ENCODE measurements at regions of chr5 and their contacts with region 1.

Region 1: DNA sequence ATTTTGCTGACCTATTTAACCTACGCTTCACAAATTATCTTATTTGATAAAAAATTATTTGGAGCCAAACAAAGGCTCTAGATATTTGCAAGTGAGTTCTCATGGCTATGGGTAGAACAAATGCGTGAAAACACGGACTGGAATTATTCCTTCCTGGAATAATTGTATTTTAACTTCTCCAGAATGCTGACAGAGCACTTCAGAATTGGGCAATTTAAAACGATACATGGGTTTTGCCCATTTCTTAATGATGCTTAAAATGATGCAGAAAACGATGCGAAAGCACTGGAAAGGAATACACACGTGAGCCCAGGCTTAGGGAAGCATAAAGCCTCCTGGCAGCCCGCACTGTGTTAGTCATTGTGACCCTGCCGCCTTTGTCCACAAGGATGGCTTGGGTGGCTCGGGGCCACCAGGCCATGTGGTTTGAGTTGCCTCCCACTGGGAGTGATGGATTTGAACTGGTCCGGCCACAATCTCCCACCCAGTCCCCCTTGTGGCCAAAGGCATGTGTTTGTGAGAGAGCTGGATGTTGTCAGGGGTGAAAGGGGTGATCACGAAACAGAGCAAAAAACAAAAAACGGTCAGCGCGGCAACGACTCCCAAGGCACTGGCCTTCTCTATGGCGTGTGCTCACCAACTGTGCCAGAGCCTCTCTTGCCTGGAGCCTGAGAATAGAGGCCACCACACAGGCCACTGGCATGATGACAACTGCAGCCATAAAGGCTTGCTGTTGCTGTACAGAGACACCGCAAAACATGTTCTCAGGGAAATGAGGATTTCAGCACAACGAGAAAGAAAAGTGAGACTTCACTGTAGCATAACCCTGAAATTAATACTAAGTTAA is 234.2 kb upstream of the ADAMTS16 start:
- DNase-seq: peak; percentile 70 to 88 (median 80)
- H3K4me3 ChIP-seq: no peak overlapping the region
- H3K27ac ChIP-seq: peak overlapping the region in 1 of 2 donors; percentile 80
- H3K4me1 ChIP-seq: peaks cover 24% of the 10 kb centered on the region
- H3K27me3 ChIP-seq: no peaks in the 10 kb centered on the region
- CTCF ChIP-seq: peak; percentile 35 to 59 (median 54)
- EP300 ChIP-seq: no peak
- POLR2A ChIP-seq: peak; percentile 30

Region 2: GRCh38 chr5:4418084-4418483 is 487.8 kb before region 1 on chr5:
- intact Hi-C with region 1: no loop called
- DNase-seq: no peak
- H3K4me3 ChIP-seq: no peak overlapping the region
- H3K27ac ChIP-seq: no peak overlapping the region
- H3K4me1 ChIP-seq: no peaks in the 10 kb centered on the region
- H3K27me3 ChIP-seq: no peaks in the 10 kb centered on the region
- CTCF ChIP-seq: no peak
- EP300 ChIP-seq: no peak
- POLR2A ChIP-seq: no peak

Region 3: DNA sequence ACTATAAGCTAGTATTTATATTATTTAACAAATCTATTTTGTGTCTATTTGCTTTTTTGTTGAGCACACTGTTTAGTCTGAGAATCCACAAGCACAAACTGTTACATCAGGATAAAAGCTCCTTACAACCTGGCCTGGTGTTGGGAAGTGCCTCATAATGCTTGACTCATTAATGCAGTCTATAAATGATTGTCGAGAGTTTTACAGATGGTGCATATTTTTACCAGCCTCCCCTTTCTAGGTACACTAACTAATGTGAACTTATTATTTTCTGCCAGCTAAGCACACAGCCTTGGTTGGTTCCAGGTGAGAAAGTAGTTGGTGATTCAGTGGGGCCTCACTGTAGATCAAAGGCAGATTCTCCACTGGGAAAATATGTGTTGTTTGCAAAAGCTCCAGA is 83.2 kb after region 1 on chr5:
- intact Hi-C with region 1: loop called in 1 of 4 experiments (anchors 10 kb)
- DNase-seq: no peak
- H3K4me3 ChIP-seq: no peak overlapping the region
- H3K27ac ChIP-seq: no peak overlapping the region
- H3K4me1 ChIP-seq: peaks cover 18% of the 10 kb centered on the region
- H3K27me3 ChIP-seq: no peaks in the 10 kb centered on the region
- CTCF ChIP-seq: no peak
- EP300 ChIP-seq: no peak
- POLR2A ChIP-seq: no peak

Region 4: DNA sequence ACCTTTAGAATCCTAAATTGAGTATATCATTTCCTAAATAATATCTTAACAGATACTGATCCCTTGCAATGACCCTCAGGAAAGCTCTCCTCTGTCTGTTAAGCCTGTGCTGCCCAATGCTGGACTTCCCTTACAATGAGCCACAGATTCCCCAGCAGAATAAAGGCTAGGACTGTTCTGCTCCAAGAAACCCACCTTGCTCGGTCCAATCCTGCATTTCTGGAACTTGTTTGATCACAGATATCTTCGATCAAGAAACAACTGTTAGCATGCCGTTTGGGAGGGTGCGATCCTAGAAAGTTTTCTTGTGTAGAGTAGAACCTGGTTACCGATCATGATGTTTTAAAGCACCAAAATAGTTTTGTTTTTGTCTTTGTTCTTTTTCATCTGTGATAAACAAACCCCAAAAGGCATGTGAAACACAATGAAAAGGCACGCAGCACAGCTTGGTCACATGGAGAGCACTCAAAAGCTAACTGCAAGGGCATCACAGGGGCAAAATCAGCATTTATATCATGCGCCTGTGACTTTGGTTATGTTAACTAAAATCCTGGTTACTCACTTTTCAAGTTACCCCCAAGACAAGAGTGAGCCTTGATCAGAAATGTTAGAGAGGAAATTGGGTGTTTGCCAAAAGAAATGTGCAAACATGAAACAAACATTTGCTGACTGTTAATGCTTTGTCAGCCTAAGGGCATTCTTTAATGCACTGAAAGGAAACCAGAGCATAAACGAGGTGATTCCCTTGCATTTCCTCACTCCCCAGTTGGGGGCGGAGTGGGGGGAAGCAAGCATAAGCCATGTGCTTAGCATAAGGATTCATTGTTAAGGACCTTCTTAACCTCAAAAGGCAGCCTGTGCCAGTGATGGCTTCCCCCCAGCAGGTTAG is 172.4 kb after region 1 on chr5:
- intact Hi-C with region 1: no loop called
- DNase-seq: no peak
- H3K4me3 ChIP-seq: no peak overlapping the region
- H3K27ac ChIP-seq: no peak overlapping the region
- H3K4me1 ChIP-seq: no peaks in the 10 kb centered on the region
- H3K27me3 ChIP-seq: no peaks in the 10 kb centered on the region
- CTCF ChIP-seq: no peak
- EP300 ChIP-seq: no peak
- POLR2A ChIP-seq: no peak

Region 5: DNA sequence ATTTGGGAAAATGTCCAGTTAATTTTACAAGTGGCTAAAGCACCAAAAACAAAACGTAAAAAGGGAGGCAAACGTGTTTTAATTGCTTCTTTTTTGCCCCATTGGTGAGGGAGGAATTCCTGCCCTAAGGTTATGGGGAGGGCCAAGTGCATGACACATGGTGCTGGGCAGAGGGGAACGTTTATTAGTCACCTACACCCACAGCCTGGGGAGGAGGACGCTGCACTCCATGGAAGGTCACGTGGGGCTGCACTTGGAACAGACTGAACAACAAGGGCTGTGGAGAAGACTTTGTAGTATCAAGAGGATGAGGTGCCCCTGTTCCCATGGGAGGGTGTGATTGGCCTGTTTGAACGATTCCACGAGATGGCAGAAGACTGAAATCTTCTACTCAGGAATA is 220.5 kb after region 1 on chr5:
- intact Hi-C with region 1: loop called in 1 of 4 experiments (anchors 10 kb)
- DNase-seq: peak; percentile 58 to 78 (median 65)
- H3K4me3 ChIP-seq: no peak overlapping the region
- H3K27ac ChIP-seq: no peak overlapping the region
- H3K4me1 ChIP-seq: peaks cover 10% of the 10 kb centered on the region
- H3K27me3 ChIP-seq: no peaks in the 10 kb centered on the region
- CTCF ChIP-seq: no peak
- EP300 ChIP-seq: no peak
- POLR2A ChIP-seq: no peak

Region 6: DNA sequence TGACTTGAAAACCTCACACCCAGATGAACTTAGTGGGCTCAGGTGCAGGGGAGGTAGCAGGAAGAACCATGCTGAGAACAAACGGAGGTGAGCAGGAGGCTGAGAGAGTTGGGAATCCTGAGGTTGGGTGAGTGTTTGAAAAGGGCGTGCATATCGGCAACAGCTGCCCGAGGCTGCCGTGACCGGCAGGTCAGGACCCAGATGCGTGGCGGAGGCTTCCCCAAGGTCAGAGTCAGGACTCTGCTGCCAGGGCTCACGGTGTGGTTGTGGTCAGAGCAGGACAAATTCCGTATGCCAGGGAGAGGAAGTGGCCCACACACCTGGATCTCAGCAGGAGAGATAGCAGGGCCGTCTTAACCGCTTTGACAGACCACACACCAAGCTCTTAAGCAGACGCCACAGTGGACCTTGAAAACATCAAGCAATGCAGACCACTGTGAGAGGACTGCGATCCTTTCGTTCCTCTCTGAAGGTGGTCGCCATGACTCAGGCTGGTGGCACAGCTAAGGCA is 277.3 kb after region 1 on chr5:
- intact Hi-C with region 1: no loop called
- DNase-seq: peak in 4 of 5 donors; percentile 26 to 73 (median 42)
- H3K4me3 ChIP-seq: no peak overlapping the region
- H3K27ac ChIP-seq: no peak overlapping the region
- H3K4me1 ChIP-seq: peaks cover 19% of the 10 kb centered on the region
- H3K27me3 ChIP-seq: no peaks in the 10 kb centered on the region
- CTCF ChIP-seq: no peak
- EP300 ChIP-seq: no peak
- POLR2A ChIP-seq: no peak

Region 7: DNA sequence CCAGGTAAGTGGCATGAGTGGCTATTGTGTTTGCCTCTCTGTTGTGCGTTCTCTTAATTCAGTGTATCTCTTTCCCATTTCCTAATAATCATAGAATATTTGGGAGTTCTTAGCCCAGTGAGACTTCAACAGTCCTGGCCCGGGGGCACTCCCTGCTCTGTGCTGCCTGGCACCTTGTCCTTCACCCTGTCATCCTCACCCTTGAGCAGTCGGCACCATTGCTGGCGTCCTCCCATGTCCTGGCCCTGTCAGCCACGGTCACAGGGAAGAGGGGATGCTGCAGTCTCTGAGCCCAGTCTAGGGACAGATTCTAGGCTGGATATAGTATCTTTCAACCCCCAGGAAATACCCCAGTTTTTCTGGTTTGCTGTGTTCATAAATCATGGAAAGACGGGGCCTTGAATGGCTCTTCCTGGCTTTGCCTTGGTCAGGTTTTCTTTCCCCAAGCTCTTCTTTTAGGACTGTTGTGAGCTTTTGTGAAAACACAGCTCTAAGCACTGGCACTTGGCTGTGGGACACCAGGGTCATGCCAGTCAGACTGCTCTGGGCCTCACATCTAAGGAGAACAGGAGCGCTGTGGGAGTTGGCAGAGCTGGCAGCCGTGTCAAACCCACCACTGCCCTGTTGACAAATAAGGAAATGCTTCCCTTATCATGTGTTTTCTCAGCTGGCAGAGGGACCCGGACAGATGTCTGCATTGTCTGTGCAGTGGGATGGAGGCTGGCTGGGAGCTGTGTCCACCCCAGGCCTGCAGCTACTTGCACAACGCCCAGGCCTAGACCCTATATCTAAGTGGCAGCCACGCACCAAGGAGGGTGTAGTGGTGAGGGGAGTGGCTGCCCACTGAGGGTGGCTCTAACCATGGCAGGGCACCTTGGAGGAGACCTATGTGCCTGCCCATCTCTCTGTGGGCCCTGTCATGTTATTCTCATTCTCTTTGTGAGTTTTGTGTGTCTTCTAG is 895.2 kb after region 1 on chr5:
- intact Hi-C with region 1: no loop called
- DNase-seq: no peak
- H3K4me3 ChIP-seq: no peak overlapping the region
- H3K27ac ChIP-seq: no peak overlapping the region
- H3K4me1 ChIP-seq: no peaks in the 10 kb centered on the region
- H3K27me3 ChIP-seq: no peaks in the 10 kb centered on the region
- CTCF ChIP-seq: no peak
- EP300 ChIP-seq: no peak
- POLR2A ChIP-seq: no peak